ENCODE measurements at regions of chr6 and their contacts with region 1.

Region 1: DNA sequence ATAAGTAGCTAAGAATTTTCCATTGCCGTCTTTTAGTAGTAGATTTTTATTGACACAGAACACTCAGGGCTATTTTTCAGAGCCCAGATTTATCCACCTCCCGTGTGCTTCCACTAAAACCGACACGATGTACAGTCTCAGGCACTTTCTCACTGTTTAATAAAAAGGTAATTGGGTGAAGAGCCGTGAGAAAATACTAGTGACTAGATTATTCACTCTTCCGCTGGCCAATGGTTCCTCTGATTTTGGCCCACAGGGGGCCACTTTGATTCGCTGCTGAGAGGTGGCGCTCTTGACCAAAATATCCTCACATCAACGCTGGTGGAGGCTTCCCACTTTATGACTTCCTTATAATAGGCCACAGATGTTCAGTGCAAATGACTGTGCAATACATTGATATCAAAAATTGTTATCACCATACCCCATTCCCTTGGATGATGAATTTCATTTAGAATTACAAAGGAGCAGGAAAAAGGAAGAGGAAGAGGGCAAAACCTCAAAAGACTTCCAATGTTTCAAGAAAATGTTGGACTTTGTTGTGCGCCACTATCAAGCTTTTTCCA is 12.3 kb upstream of the HDDC2 start:
- DNase-seq: no peak
- H3K4me3 ChIP-seq: no peak overlapping the region
- H3K27me3 ChIP-seq: peaks cover 5% of the 10 kb centered on the region
- CTCF ChIP-seq: peak; percentile 79

Region 2: GRCh38 chr6:124870611-124871459 is 443.3 kb before region 1 on chr6:
- CTCF ChIA-PET with region 1: interaction called, 10 read pairs
- POLR2A ChIA-PET with region 1: no interaction called
- DNase-seq: no peak
- H3K4me3 ChIP-seq: no peak overlapping the region
- H3K27me3 ChIP-seq: no peaks in the 10 kb centered on the region
- CTCF ChIP-seq: peak; percentile 63

Region 3: DNA sequence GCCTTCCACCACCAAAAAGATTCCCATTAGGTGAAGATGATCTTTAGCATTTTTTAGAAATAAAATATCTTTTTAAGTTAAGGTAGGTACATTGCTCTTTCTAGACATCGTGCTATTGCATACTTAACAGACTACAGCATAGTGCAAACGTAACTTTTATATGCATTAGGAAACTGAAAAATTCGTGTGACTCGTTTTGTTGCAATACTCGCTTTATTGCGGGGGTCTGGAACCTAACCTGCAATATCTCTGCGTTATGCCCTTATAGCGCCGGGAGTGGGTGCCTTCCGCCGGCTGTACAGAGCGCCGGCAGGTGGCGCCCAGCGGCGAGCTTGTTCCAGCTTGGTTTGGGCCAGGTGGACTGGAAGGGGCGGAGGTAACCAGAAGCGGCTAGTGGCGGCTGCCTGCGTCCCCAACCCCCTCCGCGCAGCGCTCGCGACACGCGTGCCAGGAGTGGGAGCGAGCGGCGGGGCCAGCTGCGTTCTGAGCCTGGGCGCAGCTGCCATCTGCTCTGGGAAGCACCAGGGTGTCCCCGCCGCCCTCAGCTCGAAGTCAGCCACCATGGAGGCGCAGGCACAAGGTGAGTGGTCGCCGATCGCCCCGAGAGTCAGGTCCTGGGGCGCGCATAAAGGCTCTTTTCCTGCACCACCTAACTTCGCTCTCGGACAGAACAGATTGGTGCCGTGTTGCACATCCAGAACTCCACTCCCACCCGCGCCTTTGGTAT is 160.5 kb before region 1 on chr6 and contains the start of gene TPD52L1:
- CTCF ChIA-PET with region 1: interaction called, 12 read pairs
- POLR2A ChIA-PET with region 1: no interaction called
- DNase-seq: no peak
- H3K4me3 ChIP-seq: peak within 1 kb of the TSS; percentile 56
- H3K27me3 ChIP-seq: no peaks in the 10 kb centered on the region; the same call in 1 of the 2 replicates
- CTCF ChIP-seq: peak; percentile 96
- polyA plus RNA-seq, gene TPD52L1: 155 and 163 TPM in 2 replicates

Region 4: DNA sequence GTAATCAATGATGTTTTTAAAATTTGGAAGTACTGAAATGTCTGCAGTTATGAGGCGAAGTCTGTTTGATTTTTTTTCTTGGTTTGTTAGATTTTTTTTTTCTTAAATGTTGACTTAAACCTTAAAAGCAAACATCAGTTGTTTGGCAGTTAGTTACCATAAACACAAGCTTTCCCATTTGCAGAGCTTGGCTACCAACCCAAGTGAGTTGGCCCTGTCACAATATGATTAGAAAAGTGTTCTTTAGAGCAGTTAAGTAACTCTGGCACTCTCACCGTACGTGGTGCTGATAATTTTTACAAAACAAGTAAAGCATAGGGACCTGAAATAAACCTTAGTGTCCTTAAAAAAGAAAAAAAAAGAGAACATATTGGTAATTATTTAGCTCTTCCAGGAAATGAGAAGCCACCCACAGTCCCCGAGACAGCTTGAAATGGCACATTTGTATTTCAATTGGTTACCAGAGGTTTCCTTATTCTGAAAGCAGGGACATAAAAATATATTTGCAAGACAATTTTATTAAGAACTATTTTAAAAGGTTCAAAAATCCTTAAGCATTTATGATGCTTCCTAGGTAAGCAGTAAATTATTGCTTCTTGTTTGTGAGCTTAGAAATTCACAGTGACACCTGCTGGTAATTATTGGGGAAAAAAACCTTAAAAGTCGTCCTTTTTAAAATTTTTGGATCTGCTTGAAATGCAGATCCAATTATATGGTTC is 439.3 kb after region 1 on chr6:
- CTCF ChIA-PET with region 1: interaction called, 53 read pairs
- POLR2A ChIA-PET with region 1: no interaction called
- DNase-seq: no peak
- H3K4me3 ChIP-seq: no peak overlapping the region
- H3K27me3 ChIP-seq: peaks cover 30% of the 10 kb centered on the region
- CTCF ChIP-seq: peak; percentile 28; the same call in 1 of the 2 replicates

Region 5: GRCh38 chr6:125759184-125759902 is 445.2 kb after region 1 on chr6:
- CTCF ChIA-PET with region 1: interaction called, 74 read pairs
- POLR2A ChIA-PET with region 1: no interaction called
- DNase-seq: no peak
- H3K4me3 ChIP-seq: no peak overlapping the region
- H3K27me3 ChIP-seq: peaks cover 8% of the 10 kb centered on the region
- CTCF ChIP-seq: no peak

Measured in BJ (cell line).